ENCODE measurements at regions of chr12 and their contacts with region 1.

Region 1: GRCh38 chr12:53746592-53747092 is 5.1 kb downstream of the CISTR start:
- DNase-seq: peak; percentile 92
- H3K4me3 Mint-ChIP-seq: no peak overlapping the region
- H3K27ac Mint-ChIP-seq: no peak overlapping the region
- H3K4me1 Mint-ChIP-seq: peaks cover 20% of the 10 kb centered on the region
- H3K27me3 Mint-ChIP-seq: peaks cover 26% of the 10 kb centered on the region

Region 2: GRCh38 chr12:53675651-53676453 is 70.8 kb before region 1 on chr12 and contains the start of gene ATP5MC2:
- CTCF ChIA-PET with region 1: interaction called, 17 read pairs
- POLR2A ChIA-PET with region 1: interaction called, 4 read pairs
- intact Hi-C with region 1: loop called (anchors 1 kb)
- DNase-seq: peak; percentile 98
- H3K4me3 Mint-ChIP-seq: peak within 1 kb of the TSS; percentile 81
- H3K27ac Mint-ChIP-seq: peak within 1 kb of the TSS; percentile 89
- H3K4me1 Mint-ChIP-seq: peaks cover 26% of the 10 kb centered on the region
- H3K27me3 Mint-ChIP-seq: peaks cover 19% of the 10 kb centered on the region
- total RNA-seq, gene ATP5MC2: 378 TPM

Region 3: DNA sequence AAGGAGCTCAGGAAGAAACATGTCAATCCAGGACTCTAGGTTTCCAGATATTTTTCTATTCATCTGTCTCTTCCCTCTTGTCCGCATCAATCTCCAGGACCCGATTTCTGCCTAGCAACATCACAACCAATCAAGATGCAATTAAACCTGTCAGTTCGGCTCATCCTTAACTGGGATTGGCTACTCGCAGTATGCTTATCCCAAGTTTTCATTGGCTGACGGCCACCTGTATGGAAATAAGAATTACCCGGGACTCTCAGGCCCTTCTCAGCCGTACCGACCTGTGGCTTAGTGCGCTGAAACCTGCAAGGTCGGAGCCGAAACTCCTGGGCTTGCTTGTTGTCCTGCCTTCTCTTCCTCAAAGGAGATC is 50.4 kb before region 1 on chr12:
- CTCF ChIA-PET with region 1: interaction called, 301 read pairs
- POLR2A ChIA-PET with region 1: no interaction called
- intact Hi-C with region 1: loop called (anchors 1 kb)
- DNase-seq: no peak
- H3K4me3 Mint-ChIP-seq: peak overlapping the region; percentile 16
- H3K27ac Mint-ChIP-seq: no peak overlapping the region
- H3K4me1 Mint-ChIP-seq: peaks cover 29% of the 10 kb centered on the region
- H3K27me3 Mint-ChIP-seq: peaks cover 75% of the 10 kb centered on the region

Region 4: GRCh38 chr12:53717319-53717718 is 29.3 kb before region 1 on chr12:
- CTCF ChIA-PET with region 1: interaction called, 49 read pairs
- POLR2A ChIA-PET with region 1: no interaction called
- intact Hi-C with region 1: no loop called
- DNase-seq: no peak
- H3K4me3 Mint-ChIP-seq: no peak overlapping the region
- H3K27ac Mint-ChIP-seq: no peak overlapping the region
- H3K4me1 Mint-ChIP-seq: no peaks in the 10 kb centered on the region
- H3K27me3 Mint-ChIP-seq: no peaks in the 10 kb centered on the region

Region 5: GRCh38 chr12:53757095-53757770 is 10.6 kb after region 1 on chr12:
- CTCF ChIA-PET with region 1: interaction called, 145 read pairs
- POLR2A ChIA-PET with region 1: interaction called, 4 read pairs
- intact Hi-C with region 1: no loop called
- DNase-seq: peak; percentile 92
- H3K4me3 Mint-ChIP-seq: peak overlapping the region; percentile 46
- H3K27ac Mint-ChIP-seq: peak overlapping the region; percentile 34
- H3K4me1 Mint-ChIP-seq: peaks cover 10% of the 10 kb centered on the region
- H3K27me3 Mint-ChIP-seq: peaks cover 36% of the 10 kb centered on the region

Region 6: DNA sequence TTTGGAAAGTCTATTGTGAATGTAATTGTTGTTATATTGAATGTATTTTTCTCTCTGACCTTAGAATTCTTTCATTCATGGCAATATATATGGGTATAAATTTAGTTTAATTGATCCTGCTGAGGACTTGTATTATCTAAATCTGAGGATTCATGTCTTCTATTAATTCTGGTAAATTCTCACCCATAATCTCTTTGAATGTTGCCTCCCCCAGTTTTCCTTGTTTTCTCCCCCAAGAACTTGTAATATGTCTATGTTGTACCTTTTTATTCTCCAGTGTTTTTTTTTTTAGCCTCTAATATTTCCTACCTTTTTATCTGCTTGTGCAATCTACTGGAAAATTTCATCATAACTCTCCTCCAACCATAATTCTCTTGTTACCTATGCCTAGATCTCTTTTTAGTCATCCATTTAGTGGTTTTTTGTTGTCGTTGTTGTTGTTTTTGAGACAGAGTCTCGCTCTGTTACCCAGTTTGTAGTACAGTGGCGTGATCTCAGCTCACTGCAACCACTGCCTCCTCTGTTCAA is 170.5 kb after region 1 on chr12:
- CTCF ChIA-PET with region 1: no interaction called
- POLR2A ChIA-PET with region 1: no interaction called
- intact Hi-C with region 1: no loop called
- DNase-seq: no peak
- H3K4me3 Mint-ChIP-seq: no peak overlapping the region
- H3K27ac Mint-ChIP-seq: no peak overlapping the region
- H3K4me1 Mint-ChIP-seq: no peaks in the 10 kb centered on the region
- H3K27me3 Mint-ChIP-seq: peaks cover 37% of the 10 kb centered on the region